A549 (cell line): ENCODE measurements at regions of chr10 and their contacts with region 1.

Region 1: GRCh38 chr10:71212318-71213126 is at the start of gene UNC5B:
- DNase-seq: peak; percentile 37 to 80
- ATAC-seq: peak; percentile 68 to 81
- H3K4me3 ChIP-seq: peak within 1 kb of the TSS; percentile 60
- H3K27ac ChIP-seq: peak within 1 kb of the TSS; percentile 31 to 79; a peak in 4 of 6 replicates
- H3K4me1 ChIP-seq: peaks cover 16% of the 10 kb centered on the region; the same call in 1 of the 3 replicates
- CTCF ChIP-seq: peak; percentile 25; the same call in 1 of the 3 replicates
- EP300 ChIP-seq: no peak
- POLR2A ChIP-seq: peak; percentile 64
- RAD21 ChIP-seq: no peak
- polyA plus RNA-seq, gene UNC5B: 1.0 and 1.3 TPM in 2 replicates

Region 2: DNA sequence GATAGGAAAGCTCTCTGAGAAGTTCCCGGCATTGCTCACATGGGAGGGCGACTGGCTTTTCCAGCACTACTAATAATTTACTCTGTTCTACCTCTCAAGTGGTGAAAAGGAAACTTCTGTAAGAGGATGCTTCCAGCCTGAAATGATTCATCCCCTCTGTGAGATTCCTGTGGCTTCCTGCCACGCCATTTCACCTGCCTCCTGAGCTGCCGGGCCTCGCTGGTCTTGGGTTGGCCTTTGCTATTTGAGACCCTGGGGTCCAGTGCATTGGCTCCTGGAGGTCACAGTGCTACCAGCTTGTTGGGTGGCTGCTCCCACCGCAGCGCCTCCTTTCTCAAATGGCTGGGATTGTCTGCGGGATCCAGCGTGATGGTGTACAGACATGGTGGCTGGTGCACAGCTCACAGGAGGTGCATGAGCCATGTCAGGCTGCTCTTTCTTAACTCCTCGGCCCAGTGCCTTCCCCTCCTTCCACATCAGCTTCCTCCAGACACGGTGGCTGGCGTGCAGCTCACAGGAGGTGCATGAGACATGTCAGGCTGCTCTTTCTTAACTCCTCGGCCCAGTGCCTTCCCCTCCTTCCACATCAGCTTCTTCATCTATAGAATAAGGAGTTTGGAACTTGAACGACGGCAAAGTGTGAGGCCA is 281.2 kb before region 1 on chr10:
- CTCF ChIA-PET with region 1: interaction called, 88 read pairs
- POLR2A ChIA-PET with region 1: no interaction called
- DNase-seq: no peak
- ATAC-seq: peak in 1 of 2 experiments; percentile 18; a peak in 2 of 6 replicates
- H3K4me3 ChIP-seq: no peak overlapping the region
- H3K27ac ChIP-seq: no peak overlapping the region
- H3K4me1 ChIP-seq: no peaks in the 10 kb centered on the region
- CTCF ChIP-seq: no peak
- EP300 ChIP-seq: no peak
- POLR2A ChIP-seq: no peak
- RAD21 ChIP-seq: no peak

Region 3: DNA sequence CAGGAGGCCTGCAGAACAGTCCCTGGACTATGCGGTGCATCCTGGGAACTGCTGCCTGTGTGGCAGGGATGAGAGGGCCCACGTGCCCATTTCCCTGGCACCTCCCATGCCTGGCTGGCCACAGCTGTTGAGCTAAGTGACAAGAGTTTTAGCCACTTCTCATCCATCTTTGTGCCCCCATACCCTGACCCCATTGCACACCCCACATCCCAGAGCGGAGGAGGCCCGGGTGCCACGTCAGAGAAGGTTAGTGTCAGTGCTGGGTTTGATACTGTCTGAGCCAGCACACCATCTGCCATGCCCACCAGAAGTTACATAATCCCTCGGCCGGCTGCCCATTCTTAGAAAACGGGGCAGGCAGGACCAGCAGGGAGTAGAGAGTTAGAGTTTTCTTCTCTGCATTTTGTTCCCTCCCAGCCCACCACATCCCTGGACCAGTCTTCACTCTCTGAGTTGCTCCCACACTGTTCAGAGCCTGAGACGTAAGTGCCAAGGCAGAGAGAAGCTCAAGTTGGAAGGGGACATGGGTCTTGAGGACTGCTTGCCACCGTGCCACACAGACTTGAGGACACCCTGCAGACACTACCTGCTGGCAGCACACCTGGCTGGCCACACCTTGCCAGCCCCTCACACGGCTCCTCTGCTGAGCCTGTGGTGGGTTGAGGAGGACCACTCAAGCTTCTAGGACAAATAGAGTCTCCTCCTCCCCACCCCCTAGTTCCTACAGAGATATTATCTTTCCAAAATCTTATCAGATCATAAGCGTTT is 13.0 kb after region 1 on chr10:
- CTCF ChIA-PET with region 1: interaction called, 27 read pairs
- POLR2A ChIA-PET with region 1: no interaction called
- DNase-seq: no peak
- ATAC-seq: no peak
- H3K4me3 ChIP-seq: no peak overlapping the region
- H3K27ac ChIP-seq: no peak overlapping the region
- H3K4me1 ChIP-seq: no peaks in the 10 kb centered on the region
- CTCF ChIP-seq: no peak
- EP300 ChIP-seq: no peak
- POLR2A ChIP-seq: no peak
- RAD21 ChIP-seq: no peak

Region 4: DNA sequence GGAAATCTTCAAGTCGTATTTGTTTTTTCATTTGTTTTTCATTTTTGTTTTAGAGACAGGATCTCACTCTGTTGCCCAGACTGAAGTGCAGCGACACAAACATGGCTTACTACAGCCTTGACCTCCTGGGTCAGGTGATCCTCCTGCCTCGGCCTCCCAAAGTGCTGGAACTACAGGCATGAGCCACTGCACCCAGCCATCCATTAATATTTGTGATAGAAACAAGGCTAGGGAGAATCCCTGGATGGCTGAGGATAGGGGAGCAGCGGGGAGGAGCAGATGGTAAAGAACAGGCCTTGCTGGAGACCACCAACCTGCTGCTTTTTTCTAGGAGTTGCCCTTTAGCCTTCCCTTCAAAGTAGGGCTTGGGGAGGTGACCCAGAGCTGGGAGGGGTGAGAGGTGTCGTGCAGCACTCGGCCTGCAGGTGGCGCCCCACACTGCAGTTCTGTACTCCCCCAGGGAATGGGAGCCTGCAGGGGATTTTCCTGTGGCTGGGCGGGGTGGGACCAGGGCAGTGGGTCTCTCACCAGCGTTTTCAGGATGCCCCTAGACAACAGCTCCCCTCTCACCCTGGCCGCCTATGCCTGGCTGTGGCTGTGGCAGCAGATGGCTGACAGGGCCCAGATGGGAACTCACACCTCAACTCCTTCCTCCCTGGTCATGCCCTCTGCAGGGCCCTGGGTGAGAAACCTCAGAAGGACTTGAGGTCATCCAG is 171.6 kb after region 1 on chr10:
- CTCF ChIA-PET with region 1: no interaction called
- POLR2A ChIA-PET with region 1: no interaction called
- DNase-seq: peak; percentile 58 to 78
- ATAC-seq: peak; percentile 91 to 98
- H3K4me3 ChIP-seq: no peak overlapping the region
- H3K27ac ChIP-seq: no peak overlapping the region
- H3K4me1 ChIP-seq: no peaks in the 10 kb centered on the region
- CTCF ChIP-seq: peak; percentile 86
- EP300 ChIP-seq: no peak
- POLR2A ChIP-seq: no peak
- RAD21 ChIP-seq: peak; percentile 85 to 89